HEK293 (cell line): ENCODE measurements at regions of chr2 and their contacts with region 1.

Region 1: DNA sequence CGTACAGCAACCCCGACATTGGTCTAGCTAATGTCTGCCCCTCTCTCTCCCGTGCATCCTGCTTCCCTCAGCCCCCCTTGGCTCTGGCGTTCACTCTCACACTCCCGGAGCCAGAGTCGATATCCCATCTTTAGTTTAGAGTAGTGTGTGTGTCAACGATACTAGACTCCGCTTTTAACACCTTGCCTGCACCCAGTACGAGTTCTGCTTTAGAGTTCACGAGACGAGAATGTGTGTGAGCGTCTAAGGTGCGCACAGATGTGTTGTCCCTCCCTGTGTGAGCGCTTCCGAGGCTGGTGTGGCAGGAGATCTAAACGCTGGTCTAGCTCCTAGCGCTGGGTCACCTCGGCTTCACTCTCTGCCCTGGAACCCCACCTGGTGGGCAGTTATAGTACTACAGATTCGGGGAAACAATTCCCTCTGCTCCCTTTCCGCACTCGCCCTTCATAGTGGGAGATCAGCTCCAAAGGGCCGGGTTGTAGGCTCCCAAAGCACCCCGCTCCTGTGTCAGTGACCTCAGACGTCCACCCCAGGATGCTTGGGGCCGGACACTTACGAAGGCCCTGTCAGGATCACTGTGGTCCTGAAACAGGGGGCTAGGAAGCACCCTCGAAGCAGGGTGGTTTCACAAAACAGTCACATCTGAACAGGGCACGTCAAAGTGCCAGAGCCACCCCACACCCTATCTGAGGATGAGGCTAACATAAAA is 2.6 kb upstream of the CYP26B1 start:
- H3K4me3 ChIP-seq: peak overlapping the region; percentile 30
- H3K27ac ChIP-seq: no peak overlapping the region; the same call in 1 of the 2 replicates
- H3K4me1 ChIP-seq: peaks cover 11% of the 10 kb centered on the region
- CTCF ChIP-seq: peak; percentile 74

Region 2: GRCh38 chr2:71545572-71546274 is 604.6 kb before region 1 on chr2:
- CTCF ChIA-PET with region 1: interaction called, 43 read pairs
- POLR2A ChIA-PET with region 1: no interaction called
- H3K4me3 ChIP-seq: no peak overlapping the region
- H3K27ac ChIP-seq: no peak overlapping the region
- H3K4me1 ChIP-seq: no peaks in the 10 kb centered on the region
- CTCF ChIP-seq: peak; percentile 78

Region 3: GRCh38 chr2:71923887-71924533 is 226.3 kb before region 1 on chr2:
- CTCF ChIA-PET with region 1: interaction called, 103 read pairs
- POLR2A ChIA-PET with region 1: no interaction called
- H3K4me3 ChIP-seq: no peak overlapping the region
- H3K27ac ChIP-seq: no peak overlapping the region
- H3K4me1 ChIP-seq: no peaks in the 10 kb centered on the region
- CTCF ChIP-seq: peak; percentile 76

Region 4: GRCh38 chr2:72137498-72138010 is 12.8 kb before region 1 on chr2:
- CTCF ChIA-PET with region 1: interaction called, 13 read pairs
- POLR2A ChIA-PET with region 1: interaction called, 3 read pairs
- H3K4me3 ChIP-seq: no peak overlapping the region
- H3K27ac ChIP-seq: no peak overlapping the region
- H3K4me1 ChIP-seq: no peaks in the 10 kb centered on the region
- CTCF ChIP-seq: peak; percentile 89

Region 5: GRCh38 chr2:72198532-72199241 is 48.4 kb after region 1 on chr2:
- CTCF ChIA-PET with region 1: no interaction called
- POLR2A ChIA-PET with region 1: no interaction called
- H3K4me3 ChIP-seq: no peak overlapping the region
- H3K27ac ChIP-seq: no peak overlapping the region
- H3K4me1 ChIP-seq: no peaks in the 10 kb centered on the region
- CTCF ChIP-seq: no peak

Region 6: GRCh38 chr2:72475272-72475671 is 325.0 kb after region 1 on chr2:
- CTCF ChIA-PET with region 1: no interaction called
- POLR2A ChIA-PET with region 1: no interaction called
- H3K4me3 ChIP-seq: no peak overlapping the region
- H3K27ac ChIP-seq: no peak overlapping the region
- H3K4me1 ChIP-seq: no peaks in the 10 kb centered on the region
- CTCF ChIP-seq: no peak

Region 7: DNA sequence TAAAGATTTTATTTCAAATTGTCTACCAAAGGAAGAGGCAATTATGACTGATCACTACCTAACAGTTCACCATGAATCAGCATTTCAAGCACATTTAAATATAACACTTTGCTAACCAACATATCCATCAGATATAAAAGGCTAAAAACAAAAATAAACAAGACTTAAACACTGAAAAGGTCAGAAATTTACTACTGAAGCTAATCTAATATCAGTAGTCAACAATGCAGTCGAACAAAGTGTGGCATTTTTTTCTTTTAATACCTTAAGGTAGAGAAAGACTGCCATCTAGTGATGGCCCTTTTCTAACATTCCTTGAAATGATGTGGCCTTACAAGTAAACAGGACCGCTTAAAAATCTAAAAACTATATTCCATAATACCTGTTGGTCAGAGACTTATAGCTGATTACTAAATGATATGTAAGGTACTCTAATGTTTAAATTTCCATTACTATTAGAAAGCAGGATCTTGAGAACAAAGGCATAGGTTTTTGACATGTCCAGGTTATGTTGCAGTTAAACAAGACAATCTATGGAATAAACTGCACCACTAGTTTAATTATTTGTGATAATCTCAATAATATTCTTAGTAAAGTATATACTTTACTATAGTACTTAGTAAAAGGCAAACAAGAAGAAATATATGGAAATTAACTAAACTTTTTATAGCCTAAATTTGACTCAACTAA is 595.5 kb after region 1 on chr2:
- CTCF ChIA-PET with region 1: interaction called, 15 read pairs
- POLR2A ChIA-PET with region 1: no interaction called
- H3K4me3 ChIP-seq: no peak overlapping the region
- H3K27ac ChIP-seq: no peak overlapping the region
- H3K4me1 ChIP-seq: no peaks in the 10 kb centered on the region
- CTCF ChIP-seq: peak; percentile 36; the same call in 1 of the 2 replicates